PC-9 (cell line): ENCODE measurements at regions of chr16 and their contacts with region 1.

Region 1: GRCh38 chr16:14300705-14301168 is 229.6 kb downstream of the MRTFB start:
- DNase-seq: peak; percentile 83 to 84
- H3K4me3 ChIP-seq: peak overlapping the region; percentile 73; the same call in 1 of the 2 replicates
- H3K27ac ChIP-seq: peak overlapping the region; percentile 83
- H3K4me1 ChIP-seq: peaks cover 8% of the 10 kb centered on the region
- H3K27me3 ChIP-seq: no peaks in the 10 kb centered on the region
- CTCF ChIP-seq: peak; percentile 68

Region 2: GRCh38 chr16:14168146-14168545 is 132.6 kb before region 1 on chr16:
- CTCF ChIA-PET with region 1: no interaction called
- POLR2A ChIA-PET with region 1: no interaction called
- intact Hi-C with region 1: no loop called
- DNase-seq: no peak
- H3K4me3 ChIP-seq: no peak overlapping the region
- H3K27ac ChIP-seq: no peak overlapping the region
- H3K4me1 ChIP-seq: 0 out of 2 replicates have a peak, but pooled peaks cover 7% of the 10 kb centered on the region
- H3K27me3 ChIP-seq: no peaks in the 10 kb centered on the region
- CTCF ChIP-seq: no peak

Region 3: DNA sequence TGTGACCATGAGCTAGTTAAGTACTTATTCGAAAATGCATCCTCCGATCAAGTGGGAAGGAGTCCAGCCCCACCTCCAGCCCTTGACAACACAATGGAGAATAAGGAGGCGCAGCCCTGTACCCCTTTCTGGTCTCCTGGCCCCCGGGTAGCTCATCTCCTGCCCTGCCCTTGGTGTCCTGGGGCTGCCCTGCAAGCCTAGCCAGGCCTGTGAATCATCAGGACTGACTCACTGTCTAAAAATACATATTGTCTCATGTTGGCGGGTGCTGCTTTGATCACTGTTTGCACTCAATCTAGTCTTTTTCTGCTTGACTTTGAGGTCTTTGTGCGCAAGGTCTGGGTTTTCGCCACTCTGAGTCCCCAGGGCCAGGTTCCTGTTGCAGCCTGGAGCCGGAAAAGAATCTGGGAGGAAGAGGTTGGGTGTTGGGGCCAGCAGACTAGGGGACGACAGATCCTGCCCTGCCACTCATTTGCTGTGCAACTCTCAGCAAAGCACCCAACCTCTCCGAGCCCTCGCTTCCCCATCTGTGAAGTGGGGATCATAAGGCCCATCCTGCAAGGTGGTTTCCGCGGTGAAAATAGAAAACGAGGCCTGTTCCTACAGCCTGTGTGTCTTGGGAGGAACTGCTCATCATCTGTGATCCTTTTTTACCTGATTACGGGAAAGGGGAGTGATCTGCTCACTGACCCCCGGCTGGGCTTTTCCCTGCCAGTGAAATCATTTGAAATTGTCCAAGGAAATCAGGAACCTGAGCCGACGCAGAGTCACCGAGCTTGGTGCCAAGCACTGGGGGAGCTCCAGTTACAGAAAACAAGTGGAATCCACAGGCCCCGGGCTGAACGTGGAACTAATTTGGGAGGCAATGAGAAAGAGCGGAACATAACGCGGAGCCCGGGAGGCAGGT is 98.9 kb after region 1 on chr16:
- CTCF ChIA-PET with region 1: no interaction called
- POLR2A ChIA-PET with region 1: interaction called, 3 read pairs
- intact Hi-C with region 1: loop called (anchors 2 kb)
- DNase-seq: peak; percentile 83 to 85
- H3K4me3 ChIP-seq: peak overlapping the region; percentile 45
- H3K27ac ChIP-seq: peak overlapping the region; percentile 92
- H3K4me1 ChIP-seq: peaks cover 51% of the 10 kb centered on the region
- H3K27me3 ChIP-seq: no peaks in the 10 kb centered on the region
- CTCF ChIP-seq: no peak

Region 4: DNA sequence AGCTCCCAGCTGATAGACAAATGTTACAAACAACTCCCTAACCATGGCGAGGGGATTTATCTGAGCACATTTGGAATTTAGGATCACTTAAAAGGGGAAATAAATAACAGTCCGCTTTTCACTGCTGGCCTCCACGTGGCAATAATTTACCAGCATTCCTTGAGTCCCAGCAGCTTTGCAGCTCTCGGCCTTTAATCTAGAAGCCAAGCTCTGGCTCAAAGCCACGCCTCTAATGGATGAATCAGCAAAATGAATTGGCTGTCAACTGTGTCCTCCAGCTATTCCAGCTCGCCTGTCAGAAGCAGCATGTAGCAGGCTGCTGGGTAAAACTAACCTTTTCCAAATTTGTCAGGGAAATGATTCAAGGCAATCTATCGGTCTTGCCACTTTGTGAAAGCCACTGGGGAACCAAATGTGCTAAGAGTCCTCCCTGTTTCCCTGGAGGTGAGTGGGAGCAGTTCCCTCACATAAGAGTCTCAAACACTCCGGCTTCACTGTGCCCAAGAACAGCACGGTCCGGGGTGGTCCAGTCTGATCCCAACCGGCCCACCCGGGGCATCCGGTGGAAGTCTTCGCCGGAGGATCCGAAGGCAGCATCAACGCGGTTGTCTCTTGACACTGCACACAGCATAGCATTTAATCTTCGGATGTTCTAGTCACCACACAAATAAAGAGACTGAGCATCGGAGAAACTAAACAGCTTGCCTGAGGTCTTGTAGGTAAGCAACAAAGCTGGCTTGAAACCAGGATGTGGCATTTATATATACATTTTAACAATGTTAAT is 186.0 kb after region 1 on chr16:
- CTCF ChIA-PET with region 1: no interaction called
- POLR2A ChIA-PET with region 1: no interaction called
- intact Hi-C with region 1: loop called (anchors 5 kb)
- DNase-seq: peak; percentile 79 to 89
- H3K4me3 ChIP-seq: peak overlapping the region; percentile 47; the same call in 1 of the 2 replicates
- H3K27ac ChIP-seq: peak overlapping the region; percentile 81
- H3K4me1 ChIP-seq: peaks cover 40% of the 10 kb centered on the region
- H3K27me3 ChIP-seq: no peaks in the 10 kb centered on the region
- CTCF ChIP-seq: no peak

Region 5: DNA sequence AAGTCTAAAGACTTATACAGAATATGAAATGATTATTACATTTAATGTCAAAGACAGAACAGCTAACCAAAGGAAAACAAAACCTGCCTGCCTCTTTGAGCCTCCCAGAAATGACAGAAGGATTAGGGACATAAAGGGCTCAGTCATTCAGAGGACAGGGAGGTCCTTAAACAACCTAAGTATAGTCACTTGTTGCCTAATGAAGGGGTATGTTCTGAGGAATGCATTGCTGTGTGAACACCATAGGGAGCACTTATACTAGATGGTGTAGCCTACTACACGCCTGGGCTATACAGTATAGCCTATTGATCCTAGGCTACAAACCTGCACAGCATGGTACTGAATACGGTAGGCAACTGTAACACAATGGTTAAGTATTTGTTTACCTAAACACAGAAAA is 222.9 kb after region 1 on chr16:
- CTCF ChIA-PET with region 1: interaction called, 11 read pairs
- POLR2A ChIA-PET with region 1: no interaction called
- intact Hi-C with region 1: no loop called
- DNase-seq: no peak
- H3K4me3 ChIP-seq: no peak overlapping the region
- H3K27ac ChIP-seq: no peak overlapping the region
- H3K4me1 ChIP-seq: peaks cover 21% of the 10 kb centered on the region
- H3K27me3 ChIP-seq: no peaks in the 10 kb centered on the region
- CTCF ChIP-seq: no peak

Region 6: DNA sequence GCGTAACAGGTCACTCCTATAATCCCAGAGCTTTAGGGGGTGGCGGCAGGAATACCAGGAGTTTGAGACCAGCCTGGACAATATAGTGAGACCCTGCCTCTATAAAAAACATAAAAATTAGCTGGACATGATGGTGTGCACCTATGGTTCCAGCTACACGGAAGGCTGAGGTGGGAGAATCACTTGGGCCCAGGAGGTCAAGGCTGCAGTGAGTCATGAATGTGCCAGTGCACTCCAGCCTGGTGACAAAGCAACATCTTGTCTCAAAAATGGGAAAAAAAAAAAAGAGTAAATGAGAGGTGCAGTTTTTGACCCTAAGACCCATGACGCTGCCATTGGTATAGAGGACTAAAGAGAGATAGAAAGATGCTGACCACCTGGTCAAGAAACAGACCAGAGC is 313.3 kb after region 1 on chr16:
- CTCF ChIA-PET with region 1: no interaction called
- POLR2A ChIA-PET with region 1: interaction called, 19 read pairs
- intact Hi-C with region 1: no loop called
- DNase-seq: no peak
- H3K4me3 ChIP-seq: no peak overlapping the region
- H3K27ac ChIP-seq: no peak overlapping the region
- H3K4me1 ChIP-seq: no peaks in the 10 kb centered on the region
- H3K27me3 ChIP-seq: no peaks in the 10 kb centered on the region
- CTCF ChIP-seq: no peak